H1 (cell line): ENCODE measurements at regions of chr3 and their contacts with region 1.

Region 1: DNA sequence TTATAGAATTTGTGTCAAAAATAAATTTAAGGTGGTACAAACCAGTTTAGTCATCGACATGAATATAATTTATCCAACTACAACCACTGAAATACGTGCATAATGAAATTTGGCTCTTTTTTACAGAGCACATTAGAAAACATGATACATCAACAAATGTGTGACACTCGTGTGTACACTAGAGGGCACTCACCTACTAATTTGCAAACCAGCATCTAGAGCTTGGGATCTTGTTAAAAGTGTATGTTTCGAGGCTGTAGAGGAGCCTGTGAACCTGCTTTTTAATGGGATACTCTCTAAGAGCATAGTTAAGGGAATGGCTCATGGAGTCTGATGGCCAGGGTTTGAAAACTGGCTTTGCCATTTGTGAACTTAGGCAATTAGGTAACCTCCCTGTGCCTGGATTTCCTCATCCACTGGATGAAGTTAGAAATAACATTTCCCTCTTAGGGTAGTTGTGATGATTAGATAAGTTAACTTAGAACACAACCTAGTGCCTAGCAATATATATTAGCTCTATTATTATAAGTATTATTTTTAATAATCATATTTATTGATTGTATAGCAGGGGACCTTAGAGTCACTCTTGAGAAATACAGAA is 8.8 kb upstream of the CPOX start:
- DNase-seq: no peak
- H3K4me3 ChIP-seq: no peak overlapping the region
- H3K27ac ChIP-seq: no peak overlapping the region
- H3K4me1 ChIP-seq: no peaks in the 10 kb centered on the region
- H3K27me3 ChIP-seq: peaks cover 0 to 1% (median 0%) of the 10 kb centered on the region in 4 experiments; a peak in 1 of 7 replicates
- CTCF ChIP-seq: peak in 2 of 3 experiments; percentile 76 to 78; a peak in 3 of 4 replicates
- EP300 ChIP-seq: no peak
- POLR2A ChIP-seq: no peak
- RAD21 ChIP-seq: peak; percentile 91 to 96

Region 2: GRCh38 chr3:98612587-98612986 is 10.4 kb after region 1 on chr3:
- CTCF ChIA-PET with region 1: interaction called, 47 read pairs
- POLR2A ChIA-PET with region 1: no interaction called
- DNase-seq: peak; percentile 38 to 69
- H3K4me3 ChIP-seq: no peak overlapping the region
- H3K27ac ChIP-seq: no peak overlapping the region
- H3K4me1 ChIP-seq: no peaks in the 10 kb centered on the region
- H3K27me3 ChIP-seq: no peaks in the 10 kb centered on the region
- CTCF ChIP-seq: peak; percentile 2 to 71 (median 56)
- EP300 ChIP-seq: no peak
- POLR2A ChIP-seq: no peak
- RAD21 ChIP-seq: peak; percentile 43 to 46; a peak in 3 of 4 replicates

Region 3: GRCh38 chr3:98645039-98645438 is 42.9 kb after region 1 on chr3:
- CTCF ChIA-PET with region 1: interaction called, 17 read pairs
- POLR2A ChIA-PET with region 1: no interaction called
- DNase-seq: no peak
- H3K4me3 ChIP-seq: no peak overlapping the region
- H3K27ac ChIP-seq: no peak overlapping the region
- H3K4me1 ChIP-seq: peaks cover 0 to 3% (median 0%) of the 10 kb centered on the region in 4 experiments; a peak in 2 of 7 replicates
- H3K27me3 ChIP-seq: no peaks in the 10 kb centered on the region
- CTCF ChIP-seq: no peak
- EP300 ChIP-seq: no peak
- POLR2A ChIP-seq: no peak
- RAD21 ChIP-seq: no peak

Region 4: DNA sequence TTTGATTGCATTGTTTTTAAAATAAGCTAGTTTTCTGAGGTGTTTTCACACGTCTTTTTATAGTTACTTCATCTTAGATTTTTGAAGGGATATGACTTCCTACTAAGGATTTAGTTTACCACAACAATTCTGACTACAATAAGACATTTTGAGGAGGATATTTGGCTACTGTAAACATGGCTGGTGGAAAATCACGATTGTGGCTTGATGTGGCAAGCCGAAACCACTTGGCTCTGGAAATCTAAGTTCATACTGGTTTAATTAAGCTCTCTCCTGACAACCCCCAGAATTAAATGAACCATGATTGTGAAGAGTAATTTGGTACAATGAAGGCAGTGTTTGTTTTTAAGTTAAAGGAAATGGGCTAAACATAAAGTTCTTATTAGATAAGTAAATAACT is 191.8 kb after region 1 on chr3:
- CTCF ChIA-PET with region 1: interaction called, 19 read pairs
- POLR2A ChIA-PET with region 1: no interaction called
- DNase-seq: no peak
- H3K4me3 ChIP-seq: no peak overlapping the region
- H3K27ac ChIP-seq: no peak overlapping the region
- H3K4me1 ChIP-seq: no peaks in the 10 kb centered on the region
- H3K27me3 ChIP-seq: no peaks in the 10 kb centered on the region
- CTCF ChIP-seq: no peak
- EP300 ChIP-seq: no peak
- POLR2A ChIP-seq: no peak
- RAD21 ChIP-seq: no peak

Region 5: GRCh38 chr3:98994128-98994762 is 392.1 kb after region 1 on chr3:
- CTCF ChIA-PET with region 1: interaction called, 10 read pairs
- POLR2A ChIA-PET with region 1: no interaction called
- DNase-seq: no peak
- H3K4me3 ChIP-seq: no peak overlapping the region
- H3K27ac ChIP-seq: no peak overlapping the region
- H3K4me1 ChIP-seq: no peaks in the 10 kb centered on the region
- H3K27me3 ChIP-seq: no peaks in the 10 kb centered on the region
- CTCF ChIP-seq: peak in 2 of 3 experiments; percentile 48 to 49; a peak in 2 of 4 replicates
- EP300 ChIP-seq: no peak
- POLR2A ChIP-seq: no peak
- RAD21 ChIP-seq: peak; percentile 73 to 75